ENCODE measurements at regions of chr6 and their contacts with region 1.

Region 1: GRCh38 chr6:131281471-131282270 is 146.4 kb downstream of the AKAP7 start:
- DNase-seq: peak; percentile 69 to 77 (median 74)
- H3K4me3 ChIP-seq: peak overlapping the region in 1 of 2 donors; percentile 48
- H3K4me3 Mint-ChIP-seq: peak overlapping the region; percentile 80 to 95 (median 90)
- H3K27ac ChIP-seq: peak overlapping the region; percentile 53
- H3K27ac Mint-ChIP-seq: peak overlapping the region; percentile 94 to 98 (median 97)
- H3K4me1 ChIP-seq: peaks cover 34% of the 10 kb centered on the region
- H3K4me1 Mint-ChIP-seq: peaks cover 27 to 50% (median 38%) of the 10 kb centered on the region in 4 donors
- H3K27me3 ChIP-seq: no peaks in the 10 kb centered on the region
- H3K27me3 Mint-ChIP-seq: no peaks in the 10 kb centered on the region

Region 2: DNA sequence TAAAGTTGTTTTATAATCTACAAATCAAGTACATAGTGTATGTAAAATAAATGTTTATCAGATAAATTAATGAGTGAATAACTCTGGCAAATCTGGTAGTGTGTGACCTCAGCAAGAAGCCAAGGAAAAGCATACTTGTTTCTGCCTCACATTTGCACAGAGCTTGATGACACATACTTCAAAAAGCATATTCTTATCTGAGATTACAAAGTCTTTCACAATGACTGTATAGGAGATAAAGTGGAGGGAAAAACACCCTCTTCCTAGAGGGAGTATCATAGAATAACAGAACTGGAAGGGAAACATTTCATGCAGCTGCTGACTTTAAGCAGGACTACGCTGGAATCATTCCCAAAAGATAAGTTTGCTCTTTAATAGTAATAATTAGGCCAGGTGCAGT is 174.5 kb before region 1 on chr6:
- CTCF ChIA-PET with region 1: no interaction called
- POLR2A ChIA-PET with region 1: no interaction called
- intact Hi-C with region 1: no loop called
- DNase-seq: no peak
- H3K4me3 ChIP-seq: no peak overlapping the region
- H3K4me3 Mint-ChIP-seq: no peak overlapping the region
- H3K27ac ChIP-seq: no peak overlapping the region
- H3K27ac Mint-ChIP-seq: no peak overlapping the region
- H3K4me1 ChIP-seq: no peaks in the 10 kb centered on the region
- H3K4me1 Mint-ChIP-seq: no peaks in the 10 kb centered on the region
- H3K27me3 ChIP-seq: no peaks in the 10 kb centered on the region
- H3K27me3 Mint-ChIP-seq: peaks cover 1 to 6% of the 10 kb centered on the region in 2 donors

Region 3: GRCh38 chr6:131205481-131206244 is 76.0 kb before region 1 on chr6:
- CTCF ChIA-PET with region 1: interaction called, 25 read pairs
- POLR2A ChIA-PET with region 1: interaction called, 80 read pairs
- intact Hi-C with region 1: loop called (anchors 1 kb)
- DNase-seq: peak in 1 of 5 donors; percentile 12
- H3K4me3 ChIP-seq: no peak overlapping the region
- H3K4me3 Mint-ChIP-seq: peak overlapping the region in 3 of 8 donors; percentile 20 to 47 (median 31)
- H3K27ac ChIP-seq: no peak overlapping the region
- H3K27ac Mint-ChIP-seq: peak overlapping the region; percentile 11 to 67 (median 32)
- H3K4me1 ChIP-seq: peaks cover 50% of the 10 kb centered on the region
- H3K4me1 Mint-ChIP-seq: peaks cover 47 to 66% (median 56%) of the 10 kb centered on the region in 4 donors
- H3K27me3 ChIP-seq: no peaks in the 10 kb centered on the region
- H3K27me3 Mint-ChIP-seq: no peaks in the 10 kb centered on the region

Region 4: GRCh38 chr6:131258816-131259476 is 22.7 kb before region 1 on chr6:
- CTCF ChIA-PET with region 1: interaction called, 4 read pairs
- POLR2A ChIA-PET with region 1: interaction called, 13 read pairs
- intact Hi-C with region 1: no loop called
- DNase-seq: no peak
- H3K4me3 ChIP-seq: no peak overlapping the region
- H3K4me3 Mint-ChIP-seq: no peak overlapping the region
- H3K27ac ChIP-seq: no peak overlapping the region
- H3K27ac Mint-ChIP-seq: peak overlapping the region in 5 of 7 donors; percentile 54 to 85 (median 74)
- H3K4me1 ChIP-seq: no peaks in the 10 kb centered on the region
- H3K4me1 Mint-ChIP-seq: peaks cover 8 to 23% (median 15%) of the 10 kb centered on the region in 4 donors
- H3K27me3 ChIP-seq: no peaks in the 10 kb centered on the region
- H3K27me3 Mint-ChIP-seq: no peaks in the 10 kb centered on the region

Region 5: DNA sequence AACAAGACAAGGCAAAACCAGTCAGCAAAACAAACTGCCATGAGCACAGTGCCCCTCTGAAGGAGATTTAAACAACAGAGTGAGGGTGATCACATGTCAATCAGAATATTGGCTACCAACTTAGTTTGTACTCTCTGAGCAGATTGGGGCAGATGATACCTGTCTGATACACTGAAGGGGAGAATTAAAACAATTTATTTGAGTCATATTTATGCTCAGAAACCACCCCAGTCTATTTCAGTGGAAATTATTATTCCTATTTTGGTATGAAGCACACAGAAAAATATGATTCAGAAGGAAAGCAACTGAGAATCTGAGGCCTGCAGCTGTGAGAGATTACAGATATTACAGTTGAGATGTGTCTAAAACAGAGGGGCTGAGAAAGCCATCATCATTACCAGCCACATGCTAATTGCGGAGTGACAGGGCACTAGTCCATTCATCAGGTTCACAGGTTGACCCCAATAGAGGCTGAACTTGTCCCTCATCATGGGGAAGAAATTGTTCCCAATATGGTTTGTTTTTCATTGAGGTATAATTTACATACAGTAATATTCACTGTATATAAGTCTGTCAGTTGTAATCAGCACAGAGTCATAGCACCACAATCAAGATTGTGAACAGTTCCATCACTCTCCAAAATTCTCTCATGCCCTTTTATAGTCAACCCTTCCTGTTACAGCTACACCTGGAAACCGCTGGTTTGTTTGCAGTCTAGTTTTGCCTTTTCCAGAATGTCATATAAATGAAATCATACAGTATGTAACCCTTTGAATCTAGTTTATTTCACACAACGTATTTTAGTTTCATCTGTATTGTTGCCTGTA is 11.9 kb before region 1 on chr6:
- CTCF ChIA-PET with region 1: interaction called, 3 read pairs
- POLR2A ChIA-PET with region 1: interaction called, 11 read pairs
- intact Hi-C with region 1: no loop called
- DNase-seq: no peak
- H3K4me3 ChIP-seq: no peak overlapping the region
- H3K4me3 Mint-ChIP-seq: no peak overlapping the region
- H3K27ac ChIP-seq: no peak overlapping the region
- H3K27ac Mint-ChIP-seq: peak overlapping the region in 2 of 7 donors; percentile 15 to 25
- H3K4me1 ChIP-seq: no peaks in the 10 kb centered on the region
- H3K4me1 Mint-ChIP-seq: peaks cover 14 to 17% (median 16%) of the 10 kb centered on the region in 4 donors
- H3K27me3 ChIP-seq: no peaks in the 10 kb centered on the region
- H3K27me3 Mint-ChIP-seq: no peaks in the 10 kb centered on the region

Region 6: DNA sequence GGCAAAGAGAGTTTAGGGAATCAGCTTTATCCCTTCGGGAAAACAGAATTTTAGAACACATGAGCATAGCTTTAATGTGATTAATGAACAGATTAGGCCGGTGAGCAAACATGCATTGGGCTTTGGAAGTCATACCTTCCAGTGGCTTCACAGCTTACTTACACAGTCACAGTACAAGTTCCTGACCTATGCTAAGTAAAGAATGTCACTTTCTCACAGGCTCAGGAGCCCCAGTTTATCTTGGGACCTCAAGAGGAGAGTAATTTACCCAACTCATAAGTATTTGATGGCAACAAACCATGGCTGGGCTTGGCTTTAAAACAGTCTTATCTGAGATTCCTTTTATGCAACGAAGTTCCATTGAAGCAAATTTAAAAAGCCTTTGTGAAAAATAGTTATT is 49.5 kb after region 1 on chr6:
- CTCF ChIA-PET with region 1: no interaction called
- POLR2A ChIA-PET with region 1: no interaction called
- intact Hi-C with region 1: no loop called
- DNase-seq: no peak
- H3K4me3 ChIP-seq: no peak overlapping the region
- H3K4me3 Mint-ChIP-seq: no peak overlapping the region
- H3K27ac ChIP-seq: no peak overlapping the region
- H3K27ac Mint-ChIP-seq: no peak overlapping the region
- H3K4me1 ChIP-seq: no peaks in the 10 kb centered on the region
- H3K4me1 Mint-ChIP-seq: peaks cover 0 to 2% (median 0%) of the 10 kb centered on the region in 4 donors
- H3K27me3 ChIP-seq: no peaks in the 10 kb centered on the region
- H3K27me3 Mint-ChIP-seq: no peaks in the 10 kb centered on the region

Region 7: DNA sequence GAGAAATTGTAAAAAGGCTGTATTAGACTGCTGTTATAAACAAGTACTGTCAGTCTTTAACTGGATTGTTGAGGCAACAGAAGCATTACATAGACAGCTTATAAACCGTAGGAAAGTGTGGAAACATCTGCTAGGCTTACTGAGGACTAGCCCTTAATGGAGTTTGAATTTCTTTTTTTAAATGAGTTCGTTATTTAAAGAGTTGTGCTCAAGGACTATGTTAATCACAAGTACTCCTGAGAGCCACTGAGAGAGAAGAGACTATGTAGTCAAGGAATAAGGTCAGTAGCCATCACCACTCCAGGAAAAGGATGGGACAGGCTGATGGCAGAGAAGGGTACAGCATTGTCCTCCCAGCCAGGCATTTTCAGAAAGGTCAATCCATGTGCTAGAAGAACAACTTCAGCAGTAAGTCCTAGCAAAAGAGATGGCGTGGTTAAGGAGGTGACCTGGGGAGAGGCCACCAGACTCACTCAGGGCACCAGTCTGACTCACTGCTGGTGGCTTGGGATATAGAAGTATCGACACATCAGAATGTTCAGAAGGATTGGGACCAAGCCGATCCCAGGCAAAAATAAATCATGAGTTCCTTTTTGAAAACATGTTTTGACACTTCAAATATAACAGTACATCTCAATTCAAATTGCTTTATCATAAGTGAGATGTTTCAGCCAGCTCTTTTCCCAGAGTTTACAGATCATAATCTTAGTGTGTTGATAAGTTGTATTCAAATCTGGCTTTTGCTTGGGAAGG is 1539.1 kb after region 1 on chr6:
- CTCF ChIA-PET with region 1: no interaction called
- POLR2A ChIA-PET with region 1: no interaction called
- intact Hi-C with region 1: no loop called
- DNase-seq: no peak
- H3K4me3 ChIP-seq: no peak overlapping the region
- H3K4me3 Mint-ChIP-seq: no peak overlapping the region
- H3K27ac ChIP-seq: no peak overlapping the region
- H3K27ac Mint-ChIP-seq: peak overlapping the region; percentile 48 to 99 (median 73)
- H3K4me1 ChIP-seq: peaks cover 32% of the 10 kb centered on the region
- H3K4me1 Mint-ChIP-seq: peaks cover 35 to 66% (median 51%) of the 10 kb centered on the region in 4 donors
- H3K27me3 ChIP-seq: no peaks in the 10 kb centered on the region
- H3K27me3 Mint-ChIP-seq: no peaks in the 10 kb centered on the region

Measured in CD4-positive, alpha-beta memory T cell (primary cell).